Esophagus muscularis mucosa (tissue), 4 donors: ENCODE measurements at regions of chr4 and their contacts with region 1.

Region 1: DNA sequence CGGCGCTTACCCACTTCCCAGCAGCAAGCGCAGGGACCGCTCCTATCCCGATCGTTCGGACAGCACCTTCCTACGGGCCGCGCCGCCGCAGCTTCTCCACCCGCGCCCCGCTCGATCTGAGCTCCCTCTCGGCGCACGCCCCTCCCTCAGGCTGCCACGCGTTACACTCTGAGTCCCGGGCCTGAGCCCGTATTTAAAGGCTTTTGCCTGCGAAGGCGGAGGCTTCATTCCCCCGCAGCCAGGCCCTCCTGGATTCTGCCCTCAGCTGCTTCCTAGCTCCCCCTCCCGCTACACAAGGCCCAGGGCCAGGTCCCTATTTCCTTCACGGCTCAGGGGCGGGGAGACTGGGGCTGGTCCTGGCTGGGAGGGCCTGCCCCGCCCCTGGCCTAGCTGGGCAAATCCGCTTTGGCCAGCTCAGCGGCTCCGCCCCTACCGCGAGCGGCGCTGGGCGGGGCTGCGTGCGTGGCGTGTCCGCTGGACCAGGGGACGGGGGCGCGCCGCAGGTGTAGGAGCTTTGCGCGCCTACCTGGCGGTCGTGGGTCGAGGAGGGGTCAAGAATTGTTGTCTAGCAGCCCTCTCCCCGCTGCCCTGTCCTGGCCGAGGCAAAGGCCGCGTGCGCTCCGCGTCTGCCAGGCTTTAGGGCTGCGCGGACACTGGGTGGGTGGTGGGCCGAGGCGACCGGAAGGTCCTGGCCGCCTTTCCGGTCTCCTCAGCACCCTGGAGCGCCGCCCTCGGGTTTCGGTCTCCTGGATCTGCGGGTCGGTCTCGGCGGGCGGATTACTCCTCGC is at the start of gene UGDH:
- DNase-seq: peak; percentile 98
- H3K4me3 ChIP-seq: peak within 1 kb of the TSS; percentile 75 to 89 (median 85)
- H3K27ac ChIP-seq: peak within 1 kb of the TSS; percentile 92 to 98 (median 95)
- H3K4me1 ChIP-seq: peaks cover 19 to 36% (median 31%) of the 10 kb centered on the region in 4 donors
- H3K27me3 ChIP-seq: no peaks in the 10 kb centered on the region
- CTCF ChIP-seq: peak in 1 of 3 experiments; percentile 16
- EP300 ChIP-seq: no peak
- POLR2A ChIP-seq: peak; percentile 87
- total RNA-seq, gene UGDH: 36.4 to 180 (median 42.1) TPM

Region 2: GRCh38 chr4:39181905-39182638 is 345.4 kb before region 1 on chr4 and contains the start of gene WDR19:
- intact Hi-C with region 1: loop called (anchors 5 kb)
- DNase-seq: peak; percentile 99
- H3K4me3 ChIP-seq: peak within 1 kb of the TSS; percentile 62 to 96 (median 71)
- H3K27ac ChIP-seq: peak within 1 kb of the TSS; percentile 70 to 86 (median 74)
- H3K4me1 ChIP-seq: peaks cover 13 to 25% (median 18%) of the 10 kb centered on the region in 4 donors
- H3K27me3 ChIP-seq: no peaks in the 10 kb centered on the region
- CTCF ChIP-seq: peak; percentile 41 to 49 (median 46)
- EP300 ChIP-seq: no peak
- POLR2A ChIP-seq: no peak
- total RNA-seq, gene WDR19: 22.1 to 32.4 (median 26.0) TPM

Region 3: GRCh38 chr4:39458505-39459300 is 68.8 kb before region 1 on chr4 and contains the starts of genes LIAS and RPL9:
- intact Hi-C with region 1: loop called (anchors 5 kb)
- DNase-seq: peak; percentile 99
- H3K4me3 ChIP-seq: peak within 1 kb of the TSS; percentile 70 to 86 (median 77)
- H3K27ac ChIP-seq: peak within 1 kb of the TSS; percentile 95 to 96 (median 96)
- H3K4me1 ChIP-seq: peaks cover 24 to 47% (median 42%) of the 10 kb centered on the region in 4 donors
- H3K27me3 ChIP-seq: no peaks in the 10 kb centered on the region
- CTCF ChIP-seq: peak in 1 of 3 experiments; percentile 12
- EP300 ChIP-seq: no peak
- POLR2A ChIP-seq: peak; percentile 92
- total RNA-seq, gene LIAS: 8.5 to 11.6 (median 9.7) TPM
- total RNA-seq, gene RPL9: 1,962 to 6,543 (median 3,653) TPM

Region 4: GRCh38 chr4:39626261-39626660 is 98.8 kb after region 1 on chr4:
- intact Hi-C with region 1: loop called (anchors 5 kb)
- DNase-seq: no peak
- H3K4me3 ChIP-seq: no peak overlapping the region
- H3K27ac ChIP-seq: no peak overlapping the region
- H3K4me1 ChIP-seq: peaks cover 3 to 24% (median 17%) of the 10 kb centered on the region in 4 donors
- H3K27me3 ChIP-seq: no peaks in the 10 kb centered on the region
- CTCF ChIP-seq: no peak
- EP300 ChIP-seq: no peak
- POLR2A ChIP-seq: no peak

Region 5: GRCh38 chr4:39648213-39648612 is 120.7 kb after region 1 on chr4:
- intact Hi-C with region 1: no loop called
- DNase-seq: no peak
- H3K4me3 ChIP-seq: no peak overlapping the region
- H3K27ac ChIP-seq: no peak overlapping the region
- H3K4me1 ChIP-seq: no peaks in the 10 kb centered on the region
- H3K27me3 ChIP-seq: no peaks in the 10 kb centered on the region
- CTCF ChIP-seq: no peak
- EP300 ChIP-seq: no peak
- POLR2A ChIP-seq: no peak

Region 6: GRCh38 chr4:39658756-39659155 is 131.3 kb after region 1 on chr4:
- intact Hi-C with region 1: no loop called
- DNase-seq: no peak
- H3K4me3 ChIP-seq: no peak overlapping the region
- H3K27ac ChIP-seq: no peak overlapping the region
- H3K4me1 ChIP-seq: peaks cover 0 to 19% (median 3%) of the 10 kb centered on the region in 4 donors
- H3K27me3 ChIP-seq: no peaks in the 10 kb centered on the region
- CTCF ChIP-seq: peak; percentile 19 to 41 (median 30)
- EP300 ChIP-seq: no peak
- POLR2A ChIP-seq: no peak

Region 7: DNA sequence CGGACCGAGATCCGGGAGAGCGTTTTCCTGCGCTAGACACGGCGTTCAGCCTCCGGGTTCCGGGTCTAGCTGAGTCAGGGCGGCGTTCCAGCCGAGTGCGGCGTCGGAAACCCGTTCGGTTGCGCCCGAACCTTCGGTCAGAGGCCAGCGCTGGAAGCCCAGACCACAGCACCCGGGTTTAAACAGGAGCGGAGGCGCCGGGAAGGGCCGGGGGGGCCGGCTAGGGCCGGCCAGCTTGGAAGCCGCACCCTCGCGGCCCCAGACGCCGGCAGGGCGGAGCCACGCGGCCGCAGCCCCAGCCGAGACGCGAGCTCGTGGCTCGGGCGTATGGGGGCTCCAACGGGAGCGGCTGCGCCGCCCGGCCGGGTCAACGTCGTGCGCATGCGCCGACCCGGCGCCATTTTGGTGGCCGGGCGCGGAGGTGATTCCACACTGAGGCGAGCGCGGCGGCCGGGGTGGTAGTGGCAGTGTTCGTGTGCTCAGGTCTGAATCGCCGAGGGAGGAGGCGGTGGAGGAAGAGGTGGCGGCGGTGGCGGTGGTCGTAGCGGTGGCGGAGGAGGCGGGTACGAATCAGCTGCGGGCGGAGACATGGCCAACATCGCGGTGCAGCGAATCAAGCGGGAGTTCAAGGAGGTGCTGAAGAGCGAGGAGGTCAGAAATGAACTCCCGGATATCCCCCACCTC is 170.4 kb after region 1 on chr4 and contains the start of gene UBE2K:
- intact Hi-C with region 1: loop called (anchors 5 kb)
- DNase-seq: peak; percentile 94
- H3K4me3 ChIP-seq: peak within 1 kb of the TSS; percentile 85 to 92 (median 88)
- H3K27ac ChIP-seq: peak within 1 kb of the TSS; percentile 92 to 96 (median 94)
- H3K4me1 ChIP-seq: peaks cover 12 to 50% (median 40%) of the 10 kb centered on the region in 4 donors
- H3K27me3 ChIP-seq: no peaks in the 10 kb centered on the region
- CTCF ChIP-seq: peak in 1 of 3 experiments; percentile 18
- EP300 ChIP-seq: no peak
- POLR2A ChIP-seq: peak; percentile 78
- total RNA-seq, gene UBE2K: 31.7 to 41.5 (median 34.3) TPM